Heart left ventricle (tissue), 16 donors: ENCODE measurements at regions of chr2 and their contacts with region 1.

Region 1: GRCh38 chr2:15939854-15940660 is at the start of gene MYCN:
- DNase-seq: peak in 3 of 5 donors; percentile 52 to 65 (median 55)
- ATAC-seq: peak; percentile 15 to 63 (median 32)
- H3K4me3 ChIP-seq: peak within 1 kb of the TSS; percentile 22 to 73 (median 58)
- H3K27ac ChIP-seq: peak within 1 kb of the TSS in 5 of 12 donors; percentile 5 to 39 (median 29)
- H3K4me1 ChIP-seq: peaks cover 0 to 50% (median 39%) of the 10 kb centered on the region in 12 donors
- H3K27me3 ChIP-seq: peaks cover 0 to 57% (median 23%) of the 10 kb centered on the region in 9 donors
- CTCF ChIP-seq: peak in 7 of 12 donors; percentile 5 to 90 (median 80)
- POLR2A ChIP-seq: no peak
- total RNA-seq, gene MYCN: 0.37 to 1.6 (median 1.0) TPM in 7 of 9 donors, not detected in the others

Region 2: GRCh38 chr2:15636972-15637785 is 302.9 kb before region 1 on chr2:
- intact Hi-C with region 1: loop called (anchors 2 to 10 kb)
- DNase-seq: peak in 3 of 5 donors; percentile 67 to 73 (median 71)
- ATAC-seq: peak; percentile 63 to 86 (median 85)
- H3K4me3 ChIP-seq: no peak overlapping the region
- H3K27ac ChIP-seq: peak overlapping the region in 1 of 12 donors; percentile 8
- H3K4me1 ChIP-seq: peaks cover 8 to 61% (median 29%) of the 10 kb centered on the region in 12 donors
- H3K27me3 ChIP-seq: no peaks in the 10 kb centered on the region
- CTCF ChIP-seq: peak; percentile 67 to 97 (median 90)
- POLR2A ChIP-seq: no peak

Region 3: GRCh38 chr2:16050908-16051489 is 110.9 kb after region 1 on chr2:
- intact Hi-C with region 1: loop called in 1 of 10 experiments (anchors 5 kb)
- DNase-seq: no peak
- ATAC-seq: peak in 2 of 4 donors; percentile 36 to 89
- H3K4me3 ChIP-seq: no peak overlapping the region
- H3K27ac ChIP-seq: no peak overlapping the region
- H3K4me1 ChIP-seq: peaks cover 0 to 8% (median 4%) of the 10 kb centered on the region in 12 donors
- H3K27me3 ChIP-seq: peaks cover 0 to 4% (median 0%) of the 10 kb centered on the region in 9 donors
- CTCF ChIP-seq: no peak
- POLR2A ChIP-seq: no peak

Region 4: DNA sequence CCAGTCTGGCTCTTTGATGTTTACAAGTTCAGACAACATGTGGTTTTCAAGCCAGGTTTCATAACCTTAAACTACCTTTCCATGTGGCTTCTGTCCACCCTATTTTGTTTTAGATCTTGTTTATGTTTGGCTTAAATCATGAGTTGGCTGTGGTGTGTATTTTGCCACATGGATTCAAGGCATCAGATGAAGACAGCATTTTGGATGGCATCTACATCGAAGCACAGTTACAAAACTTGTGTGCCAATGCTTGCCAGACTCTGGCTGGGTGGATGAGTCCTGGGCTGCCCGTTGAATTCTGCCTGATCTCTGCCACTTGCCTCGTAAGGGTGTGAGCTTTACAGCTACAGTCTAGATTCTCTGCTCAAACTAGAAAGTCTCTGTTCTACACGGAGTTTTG is 335.6 kb after region 1 on chr2:
- intact Hi-C with region 1: loop called in 5 of 10 experiments (anchors 2 to 5 kb)
- DNase-seq: no peak
- ATAC-seq: no peak
- H3K4me3 ChIP-seq: no peak overlapping the region
- H3K27ac ChIP-seq: no peak overlapping the region
- H3K4me1 ChIP-seq: no peaks in the 10 kb centered on the region
- H3K27me3 ChIP-seq: no peaks in the 10 kb centered on the region
- CTCF ChIP-seq: no peak
- POLR2A ChIP-seq: no peak

Region 5: DNA sequence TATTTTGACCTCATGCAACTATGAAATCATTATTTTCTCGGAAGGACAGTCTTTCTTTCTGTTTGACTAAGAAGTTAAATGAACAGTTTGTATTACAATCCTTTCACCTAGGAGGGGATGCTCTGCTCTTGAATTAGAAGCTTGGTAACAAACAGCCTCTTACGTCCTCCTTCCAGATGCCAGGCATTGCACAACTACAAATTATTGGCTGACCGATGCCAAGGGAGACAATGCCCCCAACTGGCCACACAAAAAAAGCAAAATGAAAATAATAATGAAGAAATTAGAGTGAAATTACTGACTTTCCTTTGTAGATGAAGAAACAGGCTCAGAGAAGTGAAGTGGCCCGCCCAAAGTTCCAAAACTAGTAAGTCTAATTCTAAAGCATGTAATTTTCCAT is 547.6 kb after region 1 on chr2:
- intact Hi-C with region 1: loop called in 9 of 10 experiments (anchors 1 to 5 kb)
- DNase-seq: peak in 1 of 5 donors; percentile 10
- ATAC-seq: peak in 2 of 4 donors; percentile 62 to 70
- H3K4me3 ChIP-seq: no peak overlapping the region
- H3K27ac ChIP-seq: no peak overlapping the region
- H3K4me1 ChIP-seq: no peaks in the 10 kb centered on the region
- H3K27me3 ChIP-seq: peaks cover 0 to 6% (median 0%) of the 10 kb centered on the region in 9 donors
- CTCF ChIP-seq: peak; percentile 19 to 54 (median 42)
- POLR2A ChIP-seq: no peak

Region 6: GRCh38 chr2:16507655-16508489 is 567.8 kb after region 1 on chr2:
- intact Hi-C with region 1: loop called in 6 of 10 experiments (anchors 5 kb)
- DNase-seq: peak; percentile 11 to 67 (median 42)
- ATAC-seq: peak; percentile 47 to 94 (median 84)
- H3K4me3 ChIP-seq: peak overlapping the region; percentile 19 to 53 (median 43)
- H3K27ac ChIP-seq: no peak overlapping the region
- H3K4me1 ChIP-seq: peaks cover 0 to 10% (median 4%) of the 10 kb centered on the region in 12 donors
- H3K27me3 ChIP-seq: peaks cover 7 to 48% (median 19%) of the 10 kb centered on the region in 9 donors
- CTCF ChIP-seq: peak; percentile 34 to 70 (median 60)
- POLR2A ChIP-seq: no peak

Region 7: GRCh38 chr2:16745466-16745865 is 805.4 kb after region 1 on chr2:
- intact Hi-C with region 1: loop called in 2 of 10 experiments (anchors 10 kb)
- DNase-seq: no peak
- ATAC-seq: no peak
- H3K4me3 ChIP-seq: no peak overlapping the region
- H3K27ac ChIP-seq: no peak overlapping the region
- H3K4me1 ChIP-seq: no peaks in the 10 kb centered on the region
- H3K27me3 ChIP-seq: no peaks in the 10 kb centered on the region
- CTCF ChIP-seq: no peak
- POLR2A ChIP-seq: no peak